Ascending aorta (tissue), 2 donors: ENCODE measurements at regions of chr10 and their contacts with region 1.

Region 1: GRCh38 chr10:3935141-3935540 is 150.1 kb upstream of the KLF6 start:
- DNase-seq: peak; percentile 17 to 88
- H3K4me3 ChIP-seq: peak overlapping the region; percentile 31 to 49
- H3K27ac ChIP-seq: peak overlapping the region; percentile 83 to 86
- H3K4me1 ChIP-seq: peaks cover 0 to 13% of the 10 kb centered on the region in 2 donors
- H3K27me3 ChIP-seq: no peaks in the 10 kb centered on the region
- CTCF ChIP-seq: peak in 1 of 3 experiments; percentile 9

Region 2: DNA sequence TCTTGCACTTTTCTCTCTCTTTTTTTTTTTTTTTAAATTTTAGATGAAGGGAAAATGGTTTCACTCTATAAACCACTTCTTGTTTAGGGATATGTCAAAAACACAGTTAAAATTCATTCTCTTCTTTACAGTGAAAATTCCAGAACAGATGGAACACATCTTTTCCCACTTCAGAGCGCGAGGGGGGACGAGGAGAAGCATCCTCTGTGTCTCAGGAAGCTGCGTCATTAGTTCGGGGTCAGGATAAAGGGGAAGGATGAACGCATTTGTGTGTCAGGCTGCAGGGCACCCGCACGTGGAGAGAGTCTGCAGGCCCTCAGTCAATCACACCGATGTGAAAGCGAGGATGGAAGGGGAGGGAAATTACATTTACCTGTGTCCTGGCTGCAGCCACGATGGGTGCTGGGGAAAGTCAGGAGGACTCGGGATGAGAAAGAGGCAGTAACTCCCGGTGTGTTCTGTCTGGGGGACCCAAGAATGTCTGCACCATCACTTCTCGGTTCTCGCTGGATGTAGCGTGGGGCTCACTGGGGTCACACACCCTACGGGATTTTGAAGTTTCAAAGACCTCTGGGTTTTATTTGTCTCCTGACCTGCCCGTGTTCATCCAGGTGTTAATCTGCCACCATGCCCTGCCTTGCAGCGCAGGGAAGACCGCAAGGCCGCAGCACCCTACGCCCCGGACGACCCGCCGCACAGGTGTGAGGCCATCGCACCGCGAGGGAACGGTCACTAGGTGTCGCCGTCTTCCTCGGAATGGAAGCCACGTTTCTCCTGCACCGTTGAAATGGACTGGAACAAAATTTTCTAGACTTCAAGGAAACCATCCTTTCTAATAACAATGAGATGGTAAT is 695.8 kb before region 1 on chr10:
- intact Hi-C with region 1: loop called (anchors 10 kb)
- DNase-seq: peak in 1 of 2 donors; percentile 83
- H3K4me3 ChIP-seq: no peak overlapping the region
- H3K27ac ChIP-seq: peak overlapping the region in 1 of 2 donors; percentile 54
- H3K4me1 ChIP-seq: peaks cover 0 to 6% of the 10 kb centered on the region in 2 donors
- H3K27me3 ChIP-seq: no peaks in the 10 kb centered on the region
- CTCF ChIP-seq: peak; percentile 89 to 97 (median 90)

Region 3: DNA sequence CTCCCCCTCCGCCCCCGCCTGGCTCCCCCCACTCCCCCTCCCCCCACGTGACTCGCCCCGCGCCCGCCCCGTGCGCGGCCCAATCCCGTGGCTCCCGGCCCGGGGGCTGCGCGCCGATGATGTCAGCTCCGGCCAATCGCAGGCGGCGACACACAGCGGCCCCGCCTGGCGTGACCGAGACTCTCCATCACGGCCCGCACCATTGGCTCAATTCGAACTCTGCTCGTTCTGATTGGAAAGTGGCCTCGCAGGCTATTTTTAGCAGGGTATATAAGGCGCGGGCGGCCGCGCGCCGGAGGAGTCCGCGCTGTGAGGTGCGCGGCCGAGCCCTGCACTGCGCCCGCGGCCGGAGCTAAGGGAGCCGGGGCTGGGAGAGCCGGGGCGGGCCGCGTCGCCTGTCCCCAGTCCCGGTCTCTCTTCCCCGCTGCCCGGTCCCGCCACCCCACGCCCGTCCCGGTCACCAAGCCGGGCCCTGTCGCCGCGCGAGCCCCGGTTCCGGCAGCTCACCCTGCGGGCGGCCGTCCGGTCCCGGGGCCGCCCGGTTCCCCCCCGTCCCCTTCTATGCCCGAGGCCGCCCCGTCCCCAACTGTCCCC is 149.8 kb before region 1 on chr10:
- intact Hi-C with region 1: loop called (anchors 2 kb)
- DNase-seq: peak; percentile 94 to 99
- H3K4me3 ChIP-seq: peak overlapping the region; percentile 97 to 99
- H3K27ac ChIP-seq: peak overlapping the region; percentile 100
- H3K4me1 ChIP-seq: peaks cover 0 to 4% of the 10 kb centered on the region in 2 donors
- H3K27me3 ChIP-seq: no peaks in the 10 kb centered on the region
- CTCF ChIP-seq: no peak

Region 4: DNA sequence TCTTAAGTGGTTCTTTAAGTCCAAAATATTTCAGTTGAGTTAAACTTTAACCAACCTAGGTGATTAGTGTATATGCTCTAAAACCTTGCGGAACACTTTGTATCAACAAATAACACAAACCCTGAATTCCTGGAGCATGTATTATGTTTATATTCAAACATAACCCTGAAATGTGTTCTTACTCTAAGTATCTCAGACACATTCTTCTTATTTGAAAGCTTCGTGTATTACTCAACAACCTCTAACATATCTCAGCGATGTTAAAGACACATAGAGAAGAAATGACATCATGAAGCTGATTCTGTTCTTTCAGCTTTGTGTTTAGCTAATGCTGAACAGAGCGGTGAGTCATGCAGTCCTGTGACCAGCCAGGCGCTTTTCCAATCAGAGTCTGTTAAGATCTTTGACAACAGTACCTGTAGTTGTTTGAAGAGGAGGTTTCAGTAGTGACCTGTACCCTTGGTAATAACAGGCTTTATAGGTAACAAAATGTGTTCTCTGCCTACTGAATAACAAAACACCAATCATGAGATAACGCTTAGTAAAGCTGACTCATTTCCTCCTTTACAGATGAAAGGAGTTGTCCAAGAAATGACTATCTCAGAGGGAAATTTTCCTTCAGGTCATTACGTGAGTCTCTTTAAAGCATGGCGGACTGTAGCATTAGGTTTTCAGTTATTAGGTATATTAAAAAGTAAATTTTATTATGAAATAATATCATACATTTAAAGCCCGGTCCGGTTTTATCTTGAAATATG is 82.8 kb before region 1 on chr10:
- intact Hi-C with region 1: loop called (anchors 2 kb)
- DNase-seq: peak; percentile 68 to 93
- H3K4me3 ChIP-seq: peak overlapping the region in 1 of 2 donors; percentile 15
- H3K27ac ChIP-seq: peak overlapping the region; percentile 85 to 87
- H3K4me1 ChIP-seq: peaks cover 4 to 36% of the 10 kb centered on the region in 2 donors
- H3K27me3 ChIP-seq: no peaks in the 10 kb centered on the region
- CTCF ChIP-seq: no peak

Region 5: DNA sequence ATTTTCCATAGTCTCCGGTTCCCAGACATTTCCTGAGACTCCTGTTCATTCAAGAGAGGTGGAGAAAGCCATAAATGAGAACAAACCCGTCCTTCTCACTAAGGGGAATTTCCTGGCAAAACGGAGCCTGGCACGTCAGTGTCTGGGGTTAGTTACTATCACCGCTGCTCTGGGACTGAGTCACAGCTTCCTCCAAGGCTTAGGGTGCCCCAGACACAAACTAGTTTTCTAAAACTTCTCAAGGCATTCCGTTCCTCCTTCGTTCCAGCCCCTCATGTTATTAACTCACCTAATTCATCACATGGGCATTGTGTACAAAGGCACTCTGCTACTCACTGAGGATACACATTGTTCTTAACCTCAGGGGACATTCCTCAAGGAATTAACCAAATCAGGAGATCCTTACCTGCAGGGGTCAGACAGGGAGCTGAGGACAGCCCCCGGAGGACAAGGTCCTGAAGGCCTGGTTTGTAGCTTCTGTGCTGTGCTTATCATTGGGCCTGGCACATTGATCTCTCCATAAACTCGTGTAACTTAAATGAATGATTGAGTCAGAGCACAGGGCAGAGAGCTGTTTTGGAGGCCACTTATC is 47.2 kb before region 1 on chr10:
- intact Hi-C with region 1: loop called (anchors 1 kb)
- DNase-seq: peak; percentile 65 to 95
- H3K4me3 ChIP-seq: no peak overlapping the region
- H3K27ac ChIP-seq: peak overlapping the region; percentile 87
- H3K4me1 ChIP-seq: peaks cover 3 to 30% of the 10 kb centered on the region in 2 donors
- H3K27me3 ChIP-seq: no peaks in the 10 kb centered on the region
- CTCF ChIP-seq: no peak

Region 6: GRCh38 chr10:4195213-4195612 is 260.1 kb after region 1 on chr10:
- intact Hi-C with region 1: no loop called
- DNase-seq: no peak
- H3K4me3 ChIP-seq: no peak overlapping the region
- H3K27ac ChIP-seq: no peak overlapping the region
- H3K4me1 ChIP-seq: peaks cover 0 to 5% of the 10 kb centered on the region in 2 donors
- H3K27me3 ChIP-seq: no peaks in the 10 kb centered on the region
- CTCF ChIP-seq: no peak

Region 7: DNA sequence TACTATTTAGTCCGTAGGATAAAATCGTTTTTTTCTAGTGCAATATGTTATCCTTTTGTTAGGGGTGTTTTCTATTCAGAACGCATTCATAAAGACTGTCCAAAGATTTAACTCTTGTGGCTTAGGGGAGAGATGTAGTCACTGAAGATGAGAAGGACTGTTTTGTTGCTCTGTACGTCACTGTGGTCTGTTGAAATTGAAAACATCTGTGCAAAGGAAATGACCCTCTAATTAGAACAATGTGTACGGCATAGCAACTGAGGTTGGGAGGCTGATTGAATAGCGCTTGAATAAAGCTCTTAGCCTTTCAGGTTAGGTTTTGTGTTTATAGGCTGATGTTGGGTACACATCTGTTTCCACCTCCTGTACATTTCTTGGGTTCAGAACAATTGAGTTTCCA is 437.5 kb after region 1 on chr10:
- intact Hi-C with region 1: no loop called
- DNase-seq: no peak
- H3K4me3 ChIP-seq: no peak overlapping the region
- H3K27ac ChIP-seq: no peak overlapping the region
- H3K4me1 ChIP-seq: no peaks in the 10 kb centered on the region
- H3K27me3 ChIP-seq: no peaks in the 10 kb centered on the region
- CTCF ChIP-seq: no peak

Region 8: GRCh38 chr10:4541292-4541691 is 606.2 kb after region 1 on chr10:
- intact Hi-C with region 1: loop called (anchors 10 kb)
- DNase-seq: peak; percentile 41 to 93
- H3K4me3 ChIP-seq: no peak overlapping the region
- H3K27ac ChIP-seq: peak overlapping the region; percentile 81 to 94
- H3K4me1 ChIP-seq: peaks cover 5 to 12% of the 10 kb centered on the region in 2 donors
- H3K27me3 ChIP-seq: no peaks in the 10 kb centered on the region
- CTCF ChIP-seq: peak; percentile 29 to 46 (median 37)

Region 9: DNA sequence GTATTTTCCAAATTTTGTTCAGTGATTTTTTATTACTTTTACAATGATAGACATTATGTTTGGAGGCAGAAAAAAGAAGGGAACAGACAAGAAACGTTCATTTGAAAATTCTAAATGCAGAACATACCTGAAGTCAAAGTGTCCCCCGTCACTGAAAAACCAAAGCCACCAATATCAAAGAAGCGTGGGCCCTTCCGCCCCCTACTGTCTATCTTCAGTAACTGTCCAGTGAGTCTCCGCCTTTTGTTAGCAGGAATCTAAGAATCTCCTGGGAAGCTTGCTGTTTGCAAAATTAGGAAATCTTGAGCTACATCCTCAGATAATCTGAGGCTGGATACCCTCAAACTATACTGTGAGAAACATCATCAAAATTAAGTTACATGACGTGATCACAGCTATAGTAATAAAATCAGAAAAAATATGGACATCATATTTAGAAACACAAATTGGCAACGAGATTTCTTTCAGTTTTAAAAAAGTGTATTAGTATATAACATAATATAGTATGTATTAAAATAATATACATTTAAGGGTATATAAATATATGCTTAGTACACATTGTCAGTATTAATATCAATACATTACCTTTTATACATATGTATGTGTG is 721.5 kb after region 1 on chr10:
- intact Hi-C with region 1: loop called (anchors 10 kb)
- DNase-seq: peak in 1 of 2 donors; percentile 70
- H3K4me3 ChIP-seq: no peak overlapping the region
- H3K27ac ChIP-seq: no peak overlapping the region
- H3K4me1 ChIP-seq: peaks cover 0 to 8% of the 10 kb centered on the region in 2 donors
- H3K27me3 ChIP-seq: no peaks in the 10 kb centered on the region
- CTCF ChIP-seq: peak; percentile 84 to 91 (median 84)